CD4-positive, alpha-beta T cell (primary cell): ENCODE measurements at regions of chr7 and their contacts with region 1.

Region 1: GRCh38 chr7:35906191-35906908 is 105.5 kb downstream of the SEPTIN7 start:
- DNase-seq: peak; percentile 46 to 88 (median 54)
- ATAC-seq: peak; percentile 96
- H3K4me3 ChIP-seq: no peak overlapping the region
- H3K4me3 Mint-ChIP-seq: no peak overlapping the region
- H3K27ac ChIP-seq: peak overlapping the region in 1 of 2 donors; percentile 3
- H3K27ac Mint-ChIP-seq: peak overlapping the region; percentile 13
- H3K4me1 ChIP-seq: no peaks in the 10 kb centered on the region
- H3K4me1 Mint-ChIP-seq: no peaks in the 10 kb centered on the region
- H3K27me3 ChIP-seq: no peaks in the 10 kb centered on the region
- H3K27me3 Mint-ChIP-seq: no peaks in the 10 kb centered on the region
- CTCF ChIP-seq: peak; percentile 97

Region 2: GRCh38 chr7:34823640-34824258 is 1082.6 kb before region 1 on chr7:
- CTCF ChIA-PET with region 1: no interaction called
- POLR2A ChIA-PET with region 1: no interaction called
- intact Hi-C with region 1: loop called in 1 of 2 experiments (anchors 10 kb)
- DNase-seq: peak; percentile 16 to 68 (median 47)
- ATAC-seq: peak; percentile 51
- H3K4me3 ChIP-seq: no peak overlapping the region
- H3K4me3 Mint-ChIP-seq: no peak overlapping the region
- H3K27ac ChIP-seq: no peak overlapping the region
- H3K27ac Mint-ChIP-seq: no peak overlapping the region
- H3K4me1 ChIP-seq: no peaks in the 10 kb centered on the region
- H3K4me1 Mint-ChIP-seq: no peaks in the 10 kb centered on the region
- H3K27me3 ChIP-seq: no peaks in the 10 kb centered on the region
- H3K27me3 Mint-ChIP-seq: no peaks in the 10 kb centered on the region
- CTCF ChIP-seq: peak; percentile 93

Region 3: GRCh38 chr7:35007768-35008167 is 898.6 kb before region 1 on chr7:
- CTCF ChIA-PET with region 1: no interaction called
- POLR2A ChIA-PET with region 1: no interaction called
- intact Hi-C with region 1: no loop called
- DNase-seq: no peak
- ATAC-seq: no peak
- H3K4me3 ChIP-seq: no peak overlapping the region
- H3K4me3 Mint-ChIP-seq: no peak overlapping the region
- H3K27ac ChIP-seq: no peak overlapping the region
- H3K27ac Mint-ChIP-seq: no peak overlapping the region
- H3K4me1 ChIP-seq: no peaks in the 10 kb centered on the region
- H3K4me1 Mint-ChIP-seq: no peaks in the 10 kb centered on the region
- H3K27me3 ChIP-seq: no peaks in the 10 kb centered on the region
- H3K27me3 Mint-ChIP-seq: no peaks in the 10 kb centered on the region
- CTCF ChIP-seq: no peak

Region 4: DNA sequence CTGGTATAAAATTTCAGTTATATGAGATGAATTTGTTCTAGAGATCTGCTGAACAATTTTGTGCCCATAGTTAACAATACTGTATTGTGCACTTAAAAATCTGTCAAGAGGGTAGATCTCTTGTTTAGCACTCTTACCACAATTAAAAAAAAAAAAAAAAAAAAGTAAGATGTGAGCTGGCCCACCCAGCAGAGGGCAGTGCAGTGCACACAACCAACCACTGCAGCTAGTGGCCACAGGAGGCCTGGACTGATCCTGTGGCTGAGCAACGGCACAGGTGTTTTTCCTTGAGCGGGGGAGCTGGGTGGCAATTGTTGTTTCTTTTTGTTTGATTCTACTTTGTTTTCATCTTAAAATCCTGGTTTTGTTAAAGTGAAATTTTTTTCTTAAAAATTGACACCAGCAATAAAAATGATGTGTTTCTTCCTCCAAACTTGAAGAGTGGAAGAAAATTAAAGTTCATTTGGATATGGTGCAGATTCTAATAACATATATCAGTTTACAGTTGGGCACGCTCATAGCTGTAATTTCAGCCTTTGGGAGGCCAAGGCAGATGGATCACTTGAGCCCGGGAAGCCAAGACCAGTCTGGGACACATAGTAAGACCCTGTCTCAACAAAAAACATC is 481.4 kb before region 1 on chr7:
- CTCF ChIA-PET with region 1: interaction called, 4 read pairs
- POLR2A ChIA-PET with region 1: no interaction called
- intact Hi-C with region 1: loop called (anchors 1 to 5 kb)
- DNase-seq: peak; percentile 17 to 78 (median 36)
- ATAC-seq: peak; percentile 76
- H3K4me3 ChIP-seq: no peak overlapping the region
- H3K4me3 Mint-ChIP-seq: no peak overlapping the region
- H3K27ac ChIP-seq: no peak overlapping the region
- H3K27ac Mint-ChIP-seq: no peak overlapping the region
- H3K4me1 ChIP-seq: no peaks in the 10 kb centered on the region
- H3K4me1 Mint-ChIP-seq: peaks cover 9% of the 10 kb centered on the region
- H3K27me3 ChIP-seq: peaks cover 0 to 5% of the 10 kb centered on the region in 2 experiments
- H3K27me3 Mint-ChIP-seq: peaks cover 37% of the 10 kb centered on the region
- CTCF ChIP-seq: peak; percentile 70

Region 5: GRCh38 chr7:35537067-35538023 is 369.0 kb before region 1 on chr7:
- CTCF ChIA-PET with region 1: no interaction called
- POLR2A ChIA-PET with region 1: no interaction called
- intact Hi-C with region 1: loop called in 1 of 2 experiments (anchors 5 kb)
- DNase-seq: peak; percentile 54 to 87 (median 74)
- ATAC-seq: peak; percentile 99
- H3K4me3 ChIP-seq: peak overlapping the region; percentile 37
- H3K4me3 Mint-ChIP-seq: peak overlapping the region; percentile 81
- H3K27ac ChIP-seq: no peak overlapping the region
- H3K27ac Mint-ChIP-seq: no peak overlapping the region
- H3K4me1 ChIP-seq: peaks cover 7% of the 10 kb centered on the region
- H3K4me1 Mint-ChIP-seq: peaks cover 5% of the 10 kb centered on the region
- H3K27me3 ChIP-seq: peaks cover 0 to 5% of the 10 kb centered on the region in 2 experiments
- H3K27me3 Mint-ChIP-seq: peaks cover 15% of the 10 kb centered on the region
- CTCF ChIP-seq: peak; percentile 96

Region 6: GRCh38 chr7:35624299-35625186 is 281.8 kb before region 1 on chr7:
- CTCF ChIA-PET with region 1: interaction called, 5 read pairs
- POLR2A ChIA-PET with region 1: no interaction called
- intact Hi-C with region 1: loop called (anchors 5 kb)
- DNase-seq: peak; percentile 5 to 71 (median 20)
- ATAC-seq: peak; percentile 92
- H3K4me3 ChIP-seq: no peak overlapping the region
- H3K4me3 Mint-ChIP-seq: no peak overlapping the region
- H3K27ac ChIP-seq: no peak overlapping the region
- H3K27ac Mint-ChIP-seq: no peak overlapping the region
- H3K4me1 ChIP-seq: peaks cover 5% of the 10 kb centered on the region
- H3K4me1 Mint-ChIP-seq: peaks cover 5% of the 10 kb centered on the region
- H3K27me3 ChIP-seq: no peaks in the 10 kb centered on the region
- H3K27me3 Mint-ChIP-seq: no peaks in the 10 kb centered on the region
- CTCF ChIP-seq: peak; percentile 80

Region 7: GRCh38 chr7:35707422-35707821 is 198.9 kb before region 1 on chr7:
- CTCF ChIA-PET with region 1: interaction called, 10 read pairs
- POLR2A ChIA-PET with region 1: interaction called, 8 read pairs
- intact Hi-C with region 1: loop called (anchors 1 kb)
- DNase-seq: no peak
- ATAC-seq: no peak
- H3K4me3 ChIP-seq: no peak overlapping the region
- H3K4me3 Mint-ChIP-seq: no peak overlapping the region
- H3K27ac ChIP-seq: no peak overlapping the region
- H3K27ac Mint-ChIP-seq: no peak overlapping the region
- H3K4me1 ChIP-seq: peaks cover 13% of the 10 kb centered on the region
- H3K4me1 Mint-ChIP-seq: peaks cover 12% of the 10 kb centered on the region
- H3K27me3 ChIP-seq: no peaks in the 10 kb centered on the region
- H3K27me3 Mint-ChIP-seq: no peaks in the 10 kb centered on the region
- CTCF ChIP-seq: no peak

Region 8: DNA sequence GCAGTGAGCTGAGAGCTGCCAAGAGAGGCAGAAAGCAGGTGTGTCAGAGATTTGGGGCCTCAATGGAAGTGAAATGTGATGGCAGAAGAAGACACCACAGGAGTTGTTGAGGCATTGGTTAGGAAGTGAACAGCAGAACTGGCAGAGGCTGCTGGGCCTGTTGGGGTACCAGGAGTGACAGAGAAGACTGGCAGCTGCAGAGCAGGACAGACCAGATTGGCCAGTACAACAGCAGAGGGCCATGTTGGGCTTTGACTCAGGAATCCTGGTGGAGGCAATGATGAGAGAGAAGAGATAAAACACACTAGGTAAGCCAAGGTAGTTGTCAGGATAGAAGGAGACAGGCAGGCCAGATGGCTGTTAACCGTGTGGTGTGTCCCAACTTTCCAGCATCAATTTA is 191.5 kb before region 1 on chr7:
- CTCF ChIA-PET with region 1: interaction called, 10 read pairs
- POLR2A ChIA-PET with region 1: interaction called, 8 read pairs
- intact Hi-C with region 1: no loop called
- DNase-seq: no peak
- ATAC-seq: no peak
- H3K4me3 ChIP-seq: no peak overlapping the region
- H3K4me3 Mint-ChIP-seq: no peak overlapping the region
- H3K27ac ChIP-seq: no peak overlapping the region
- H3K27ac Mint-ChIP-seq: no peak overlapping the region
- H3K4me1 ChIP-seq: peaks cover 4% of the 10 kb centered on the region
- H3K4me1 Mint-ChIP-seq: peaks cover 5% of the 10 kb centered on the region
- H3K27me3 ChIP-seq: no peaks in the 10 kb centered on the region
- H3K27me3 Mint-ChIP-seq: no peaks in the 10 kb centered on the region
- CTCF ChIP-seq: no peak